ENCODE measurements at regions of chr4 and their contacts with region 1.

Region 1: DNA sequence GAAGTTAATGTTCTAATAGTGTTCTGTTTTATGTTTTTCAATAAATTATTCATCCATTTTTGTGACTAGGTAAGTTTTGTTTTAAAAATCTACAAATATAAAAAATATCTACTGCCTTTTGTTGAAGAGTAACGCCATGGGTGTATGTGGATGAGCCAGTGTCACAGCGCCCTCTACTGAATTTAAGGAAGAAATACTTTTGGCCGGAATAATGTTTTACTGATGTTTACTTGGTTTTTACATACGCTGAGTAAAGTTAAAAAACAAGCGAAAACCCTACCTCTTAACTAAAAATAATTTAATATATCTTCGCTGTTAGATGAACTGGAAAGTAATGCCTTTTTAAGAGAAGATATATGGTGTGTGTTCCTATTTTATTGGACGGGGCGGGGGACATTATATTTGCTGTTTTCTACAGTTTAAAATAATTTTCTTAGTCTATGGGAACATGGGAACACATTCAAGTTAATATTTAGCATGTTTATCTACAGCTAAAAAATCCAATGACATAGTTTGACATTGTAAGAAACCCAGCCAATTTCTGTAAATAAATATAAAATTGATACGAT is 86.1 kb downstream of the CPE start:
- DNase-seq: peak; percentile 48
- ATAC-seq: peak; percentile 53
- H3K4me3 ChIP-seq: no peak overlapping the region
- H3K27ac ChIP-seq: no peak overlapping the region
- H3K4me1 ChIP-seq: no peaks in the 10 kb centered on the region; the same call in 1 of the 2 replicates
- H3K27me3 ChIP-seq: no peaks in the 10 kb centered on the region
- CTCF ChIP-seq: peak; percentile 88
- POLR2A ChIP-seq: no peak
- RAD21 ChIP-seq: peak; percentile 92

Region 2: GRCh38 chr4:165112368-165113139 is 352.3 kb before region 1 on chr4 and contains the start of gene TMEM192:
- CTCF ChIA-PET with region 1: interaction called, 3 read pairs
- POLR2A ChIA-PET with region 1: no interaction called
- dilution Hi-C with region 1: no loop called
- in situ Hi-C with region 1: no loop called
- intact Hi-C with region 1: loop called (anchors 5 kb)
- DNase-seq: peak; percentile 85
- ATAC-seq: peak; percentile 99
- H3K4me3 ChIP-seq: peak within 1 kb of the TSS; percentile 83
- H3K27ac ChIP-seq: peak within 1 kb of the TSS; percentile 56
- H3K4me1 ChIP-seq: peaks cover 2% of the 10 kb centered on the region; the same call in 1 of the 2 replicates
- H3K27me3 ChIP-seq: no peaks in the 10 kb centered on the region
- CTCF ChIP-seq: peak; percentile 36; the same call in 1 of the 2 replicates
- POLR2A ChIP-seq: no peak; the same call in none of the 2 replicates
- RAD21 ChIP-seq: no peak
- total RNA-seq, gene TMEM192: 11.1 and 17.2 TPM in 2 replicates

Region 3: DNA sequence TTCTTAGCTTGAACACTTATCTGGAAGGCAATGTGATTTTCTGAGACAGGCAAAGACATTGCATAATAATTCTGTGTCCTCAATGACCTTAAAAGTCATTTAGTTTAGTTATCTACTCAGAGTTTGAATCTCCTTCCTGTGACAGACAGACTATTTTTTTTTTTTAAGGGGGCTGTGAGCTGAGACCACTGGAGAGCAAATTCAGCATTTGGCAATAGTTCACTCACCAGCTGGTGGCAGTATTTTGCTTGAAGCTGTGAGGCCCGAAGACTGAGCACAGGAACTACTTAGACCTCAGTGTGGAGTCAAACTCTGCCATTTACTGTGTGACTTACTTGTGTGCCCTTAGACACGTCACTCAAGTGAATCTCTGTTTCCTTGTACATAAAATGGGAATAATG is 109.0 kb before region 1 on chr4:
- CTCF ChIA-PET with region 1: no interaction called
- POLR2A ChIA-PET with region 1: no interaction called
- dilution Hi-C with region 1: no loop called
- in situ Hi-C with region 1: loop called (anchors 5 kb)
- intact Hi-C with region 1: loop called (anchors 1 kb)
- DNase-seq: peak; percentile 20
- ATAC-seq: peak; percentile 51; the same call in 1 of the 2 replicates
- H3K4me3 ChIP-seq: no peak overlapping the region
- H3K27ac ChIP-seq: no peak overlapping the region
- H3K4me1 ChIP-seq: no peaks in the 10 kb centered on the region
- H3K27me3 ChIP-seq: 0 out of 2 replicates have a peak, but pooled peaks cover 1% of the 10 kb centered on the region
- CTCF ChIP-seq: peak; percentile 36
- POLR2A ChIP-seq: no peak
- RAD21 ChIP-seq: peak; percentile 20; the same call in 1 of the 2 replicates

Measured in IMR-90 (cell line).